Activated CD8-positive, alpha-beta T cell treated with anti-CD3 and anti-CD28 coated beads for 36 hours (primary cell): ENCODE measurements at regions of chr17 and their contacts with region 1.

Region 1: GRCh38 chr17:1573916-1574696 is 11.5 kb upstream of the PITPNA start:
- DNase-seq: peak; percentile 86
- ATAC-seq: peak; percentile 90
- H3K4me3 Mint-ChIP-seq: no peak overlapping the region
- H3K27ac Mint-ChIP-seq: no peak overlapping the region
- H3K4me1 Mint-ChIP-seq: peaks cover 10% of the 10 kb centered on the region
- H3K27me3 Mint-ChIP-seq: no peaks in the 10 kb centered on the region
- CTCF ChIP-seq: peak; percentile 90

Region 2: DNA sequence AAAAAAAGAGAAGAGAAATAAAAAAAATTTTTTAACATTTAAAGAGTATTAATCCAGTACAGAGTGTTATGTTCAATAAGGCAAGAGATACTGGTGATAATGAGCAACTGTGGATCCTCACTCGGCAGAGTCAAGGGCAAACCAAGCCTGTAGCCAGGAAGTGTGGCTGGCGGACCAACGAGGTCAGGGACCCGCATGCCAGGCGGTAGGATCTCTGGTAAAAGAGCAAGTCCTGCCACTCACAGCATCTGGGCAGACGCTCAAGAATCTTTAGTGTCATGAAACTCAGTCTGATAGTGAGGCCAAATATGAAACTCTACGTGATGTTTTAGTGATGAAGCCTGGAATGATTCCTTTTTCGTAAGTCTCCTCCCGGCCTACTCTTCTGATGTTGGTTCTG is 813.7 kb before region 1 on chr17:
- CTCF ChIA-PET with region 1: no interaction called
- POLR2A ChIA-PET with region 1: no interaction called
- intact Hi-C with region 1: no loop called
- DNase-seq: no peak
- ATAC-seq: no peak
- H3K4me3 Mint-ChIP-seq: no peak overlapping the region
- H3K27ac Mint-ChIP-seq: no peak overlapping the region
- H3K4me1 Mint-ChIP-seq: no peaks in the 10 kb centered on the region
- H3K27me3 Mint-ChIP-seq: no peaks in the 10 kb centered on the region
- CTCF ChIP-seq: no peak

Region 3: DNA sequence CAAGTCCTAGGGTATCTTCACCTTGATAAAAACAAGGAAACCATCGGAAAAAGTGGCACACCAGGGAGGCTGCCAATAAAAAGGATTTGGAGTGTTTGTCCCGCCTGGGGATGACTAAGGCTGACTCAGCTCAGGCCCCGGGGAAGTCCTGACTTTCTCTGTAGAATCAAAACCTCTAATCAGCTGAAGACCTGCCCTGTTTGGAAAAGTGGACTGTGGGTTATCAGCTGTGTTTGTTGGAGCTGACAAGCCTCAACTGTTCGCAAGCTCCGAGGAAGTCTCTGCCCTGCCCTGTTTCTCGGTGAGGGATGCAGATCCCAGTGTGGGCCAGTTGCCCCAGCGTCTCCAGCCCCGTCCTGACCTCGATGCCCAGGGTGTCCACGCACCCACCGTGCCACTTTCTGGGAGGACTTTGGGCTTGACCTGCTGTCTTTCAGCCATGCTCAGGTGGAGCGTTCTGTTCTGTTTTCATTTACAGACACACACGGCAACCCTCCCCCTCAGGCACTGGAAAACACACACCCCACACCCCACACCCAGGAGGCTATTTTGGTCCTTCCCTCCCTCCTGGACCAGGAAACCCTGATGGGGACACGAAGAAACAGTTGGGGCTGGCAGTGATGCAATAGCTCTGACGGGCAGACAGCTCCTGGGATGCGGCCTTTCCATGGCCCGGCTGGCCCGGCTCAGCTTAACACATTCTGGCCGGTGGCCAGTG is 16.1 kb after region 1 on chr17:
- CTCF ChIA-PET with region 1: interaction called, 13 read pairs
- POLR2A ChIA-PET with region 1: interaction called, 5 read pairs
- intact Hi-C with region 1: no loop called
- DNase-seq: peak; percentile 42
- ATAC-seq: no peak
- H3K4me3 Mint-ChIP-seq: no peak overlapping the region
- H3K27ac Mint-ChIP-seq: no peak overlapping the region
- H3K4me1 Mint-ChIP-seq: peaks cover 17% of the 10 kb centered on the region
- H3K27me3 Mint-ChIP-seq: no peaks in the 10 kb centered on the region
- CTCF ChIP-seq: no peak

Region 4: GRCh38 chr17:1617620-1618174 is 43.6 kb after region 1 on chr17:
- CTCF ChIA-PET with region 1: interaction called, 16 read pairs
- POLR2A ChIA-PET with region 1: interaction called, 3 read pairs
- intact Hi-C with region 1: no loop called
- DNase-seq: no peak
- ATAC-seq: no peak
- H3K4me3 Mint-ChIP-seq: no peak overlapping the region
- H3K27ac Mint-ChIP-seq: no peak overlapping the region
- H3K4me1 Mint-ChIP-seq: peaks cover 3% of the 10 kb centered on the region
- H3K27me3 Mint-ChIP-seq: no peaks in the 10 kb centered on the region
- CTCF ChIP-seq: no peak

Region 5: DNA sequence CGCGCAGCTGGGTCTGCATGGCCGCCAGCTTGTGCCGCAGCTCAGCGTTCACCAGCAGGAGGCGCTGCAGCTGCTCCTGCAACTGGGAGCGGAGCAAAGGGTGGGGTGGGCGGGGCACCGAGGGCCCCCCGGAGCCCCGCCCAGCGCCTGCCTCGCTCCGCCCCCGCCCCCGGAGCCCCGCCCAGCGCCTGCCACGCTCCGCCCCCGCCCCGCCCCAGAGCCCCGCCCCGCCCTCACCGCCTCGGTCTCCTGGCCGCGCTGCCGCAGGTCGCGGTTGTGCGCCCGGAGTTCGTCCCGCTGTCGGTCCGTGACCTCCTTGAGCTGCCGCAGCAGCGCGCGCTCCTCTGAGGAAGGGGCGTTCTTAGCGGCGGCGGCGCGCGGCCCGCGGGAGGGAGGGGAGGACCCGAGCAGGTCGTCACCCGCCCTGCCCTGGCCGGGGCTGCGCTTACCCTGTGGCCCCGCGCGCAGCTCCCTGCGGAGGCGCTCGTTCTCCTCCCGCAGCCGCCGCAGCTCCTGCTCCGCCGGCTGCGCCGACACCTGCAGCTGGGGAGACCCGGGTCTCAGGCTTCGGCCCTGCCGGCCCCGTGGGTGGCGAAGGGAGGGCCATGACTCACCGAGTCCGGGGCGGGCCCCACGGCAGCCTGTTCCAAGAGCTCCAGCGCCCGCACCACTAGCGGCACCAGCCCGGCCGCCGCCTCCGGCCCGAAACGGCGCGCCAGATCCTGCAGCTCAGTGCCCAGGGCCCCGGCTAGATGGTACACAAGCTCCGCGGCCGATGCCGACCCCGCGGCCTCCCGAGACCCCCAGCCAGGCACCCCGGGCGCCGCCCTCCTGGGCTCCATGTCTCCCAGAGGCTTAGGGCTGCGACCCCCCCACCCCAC is 75.1 kb after region 1 on chr17:
- CTCF ChIA-PET with region 1: interaction called, 18 read pairs
- POLR2A ChIA-PET with region 1: interaction called, 4 read pairs
- intact Hi-C with region 1: no loop called
- DNase-seq: peak; percentile 95
- ATAC-seq: peak; percentile 72
- H3K4me3 Mint-ChIP-seq: peak overlapping the region; percentile 63
- H3K27ac Mint-ChIP-seq: peak overlapping the region; percentile 46
- H3K4me1 Mint-ChIP-seq: peaks cover 35% of the 10 kb centered on the region
- H3K27me3 Mint-ChIP-seq: no peaks in the 10 kb centered on the region
- CTCF ChIP-seq: peak; percentile 82